GM23248 (cell line): ENCODE measurements at regions of chr1 and their contacts with region 1.

Region 1: DNA sequence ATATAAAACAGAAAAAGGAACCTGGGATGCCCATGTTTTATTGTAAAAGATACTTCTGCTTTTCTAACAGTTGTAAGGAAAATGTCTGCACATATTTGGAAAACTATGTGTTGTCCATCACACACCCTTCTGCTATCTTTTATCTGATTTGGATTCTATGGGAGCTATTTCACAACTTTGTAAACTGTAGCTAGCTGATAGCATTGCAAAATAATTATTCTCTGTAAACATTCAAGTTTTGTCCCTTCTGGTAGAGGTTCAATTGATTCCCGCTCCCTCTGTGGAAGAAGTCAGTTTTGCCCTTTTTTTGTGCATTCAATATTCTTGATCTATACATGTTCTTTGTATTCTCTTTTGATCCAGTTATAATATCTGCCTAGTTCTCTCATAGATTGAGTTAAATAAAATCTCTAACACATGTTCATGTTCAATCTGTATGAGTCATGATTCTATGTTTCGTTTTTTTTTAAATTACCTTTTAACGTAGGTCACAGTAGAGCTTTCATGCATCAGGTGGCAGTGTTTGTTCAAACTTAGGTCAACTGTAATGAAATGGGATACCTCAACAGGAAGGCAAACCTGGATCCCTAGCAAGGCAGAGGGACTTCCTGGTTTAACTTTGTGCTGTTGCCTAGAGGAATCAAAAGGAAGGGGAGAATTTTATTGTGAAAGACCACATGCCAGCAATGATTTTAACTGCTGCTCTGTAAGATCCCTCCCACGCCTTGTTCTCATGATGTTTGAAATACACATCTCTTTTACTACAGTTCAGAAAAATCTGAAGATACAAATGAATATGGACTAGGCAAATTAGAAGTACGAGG is 26.0 kb upstream of the BCL9 start:
- DNase-seq: peak; percentile 65
- H3K4me3 ChIP-seq: no peak overlapping the region
- H3K27ac ChIP-seq: no peak overlapping the region
- H3K4me1 ChIP-seq: no peaks in the 10 kb centered on the region
- H3K27me3 ChIP-seq: peaks cover 9% of the 10 kb centered on the region; the same call in 1 of the 2 replicates

Region 2: DNA sequence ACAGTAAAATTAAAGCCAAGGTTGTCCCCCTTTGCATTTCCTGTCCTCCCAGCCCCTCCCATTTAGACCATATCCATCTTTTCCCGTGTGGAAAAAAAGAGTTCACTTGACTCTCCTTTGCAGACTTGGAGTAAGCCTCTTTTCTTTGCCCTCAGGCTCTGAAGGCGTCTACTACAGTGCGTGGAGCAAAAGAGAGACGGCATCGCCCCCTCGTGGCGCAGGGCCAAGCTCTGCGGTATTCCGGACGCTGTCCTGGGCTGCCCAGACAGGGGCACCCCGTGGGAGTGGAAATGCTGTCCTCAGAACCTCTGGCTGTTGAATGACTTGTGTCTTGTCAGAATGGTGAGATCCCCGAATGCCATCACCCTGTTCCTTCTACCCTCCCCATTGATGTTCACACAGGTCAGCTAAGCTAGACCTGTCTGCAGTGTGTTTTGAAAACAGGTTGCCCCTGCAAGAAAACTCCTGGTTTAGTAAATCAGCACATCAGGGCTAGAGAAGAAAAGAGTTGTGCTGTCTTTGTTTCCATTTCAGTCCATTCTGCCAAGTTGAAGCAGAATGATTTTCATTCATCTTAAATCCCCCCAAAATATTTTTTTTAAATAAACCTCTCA is 375.0 kb after region 1 on chr1:
- in situ Hi-C with region 1: loop called (anchors 25 kb)
- DNase-seq: peak; percentile 64
- H3K4me3 ChIP-seq: no peak overlapping the region
- H3K27ac ChIP-seq: no peak overlapping the region
- H3K4me1 ChIP-seq: no peaks in the 10 kb centered on the region
- H3K27me3 ChIP-seq: no peaks in the 10 kb centered on the region